GM18951 (cell line): ENCODE measurements at regions of chr11 and their contacts with region 1.

Region 1: DNA sequence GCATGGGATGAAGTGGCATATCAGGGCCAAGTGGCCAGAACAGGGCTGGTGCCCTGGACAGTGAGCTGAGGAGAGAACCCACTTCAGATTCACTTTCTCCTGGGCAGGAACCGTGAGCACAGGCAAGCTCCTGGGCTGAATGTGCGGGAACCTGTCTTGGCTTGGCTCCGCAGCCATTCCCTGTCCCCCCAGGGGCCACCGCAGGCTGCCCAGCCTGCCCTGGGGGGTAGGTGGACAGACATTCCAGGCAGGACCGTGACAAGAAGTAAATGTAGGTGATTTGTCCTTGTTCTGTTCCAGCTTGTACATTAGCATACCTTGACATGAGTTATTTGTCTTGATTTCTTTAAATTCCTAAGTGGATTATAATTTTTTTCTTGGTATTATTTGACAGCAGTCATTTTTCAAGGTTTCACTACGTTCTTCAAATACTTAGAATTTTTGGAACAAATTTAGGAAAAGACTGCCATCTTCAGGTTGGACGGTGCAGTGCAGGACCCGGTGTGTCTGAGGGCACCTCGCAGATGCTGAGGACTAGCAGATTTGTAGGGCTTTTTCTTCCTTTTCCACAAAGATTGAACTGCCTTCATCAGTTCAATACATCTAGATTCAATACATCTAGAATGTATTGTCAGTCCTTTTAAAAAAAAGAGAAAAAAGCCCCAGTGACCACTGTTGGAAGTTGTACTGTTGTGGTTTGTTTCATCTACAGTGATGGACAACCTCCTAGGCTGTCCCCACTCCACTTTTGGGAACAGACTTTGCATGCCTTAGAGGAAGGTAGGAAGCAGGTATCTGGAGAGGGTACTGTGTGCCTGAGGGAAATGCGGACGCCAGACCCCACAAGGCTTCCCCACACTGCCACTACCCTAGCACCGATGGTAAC is 115.1 kb upstream of the RASSF10 start:
- POLR2A ChIP-seq: no peak

Region 2: GRCh38 chr11:12319988-12320387 is 574.0 kb before region 1 on chr11:
- in situ Hi-C with region 1: loop called (anchors 10 kb)
- POLR2A ChIP-seq: no peak

Region 3: DNA sequence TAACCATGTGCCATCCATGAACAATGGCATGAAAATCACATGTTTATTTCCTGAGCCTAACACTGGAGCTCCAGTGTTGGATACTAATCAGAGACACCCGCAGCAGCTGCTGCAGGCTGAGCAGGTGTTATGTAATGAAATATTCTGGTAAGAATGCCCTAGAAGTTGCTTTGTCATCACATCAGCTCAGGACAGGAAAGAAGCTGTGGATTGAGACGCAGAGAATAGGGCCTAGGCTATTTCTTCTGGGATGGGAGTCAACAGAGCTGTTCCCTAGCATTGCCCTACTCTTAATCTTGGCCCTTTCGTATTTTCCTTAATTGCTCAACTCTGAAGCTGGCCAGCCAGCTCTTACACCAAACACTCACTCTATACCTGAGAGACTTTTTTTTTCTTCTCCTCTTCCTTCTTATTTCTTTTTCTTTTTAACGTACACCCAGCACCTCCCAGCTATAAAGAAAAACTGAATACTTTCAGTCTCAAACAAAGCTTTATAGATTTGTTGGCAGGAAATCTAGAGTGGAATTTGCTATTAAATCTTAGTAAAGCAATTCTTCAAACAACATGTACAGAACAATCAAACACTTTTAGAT is 147.0 kb after region 1 on chr11:
- in situ Hi-C with region 1: no loop called
- POLR2A ChIP-seq: no peak